Head of caudate nucleus (tissue), 42 donors: ENCODE measurements at regions of chr6 and their contacts with region 1.

Region 1: GRCh38 chr6:164927288-164928056 is 381.9 kb downstream of the C6orf118 start:
- DNase-seq: peak; percentile 77 to 94 (median 89)

Region 2: GRCh38 chr6:163419413-163420288 is 1507.8 kb before region 1 on chr6:
- intact Hi-C with region 1: loop called (anchors 5 kb)
- DNase-seq: peak in 1 of 42 donors; percentile 40

Region 3: DNA sequence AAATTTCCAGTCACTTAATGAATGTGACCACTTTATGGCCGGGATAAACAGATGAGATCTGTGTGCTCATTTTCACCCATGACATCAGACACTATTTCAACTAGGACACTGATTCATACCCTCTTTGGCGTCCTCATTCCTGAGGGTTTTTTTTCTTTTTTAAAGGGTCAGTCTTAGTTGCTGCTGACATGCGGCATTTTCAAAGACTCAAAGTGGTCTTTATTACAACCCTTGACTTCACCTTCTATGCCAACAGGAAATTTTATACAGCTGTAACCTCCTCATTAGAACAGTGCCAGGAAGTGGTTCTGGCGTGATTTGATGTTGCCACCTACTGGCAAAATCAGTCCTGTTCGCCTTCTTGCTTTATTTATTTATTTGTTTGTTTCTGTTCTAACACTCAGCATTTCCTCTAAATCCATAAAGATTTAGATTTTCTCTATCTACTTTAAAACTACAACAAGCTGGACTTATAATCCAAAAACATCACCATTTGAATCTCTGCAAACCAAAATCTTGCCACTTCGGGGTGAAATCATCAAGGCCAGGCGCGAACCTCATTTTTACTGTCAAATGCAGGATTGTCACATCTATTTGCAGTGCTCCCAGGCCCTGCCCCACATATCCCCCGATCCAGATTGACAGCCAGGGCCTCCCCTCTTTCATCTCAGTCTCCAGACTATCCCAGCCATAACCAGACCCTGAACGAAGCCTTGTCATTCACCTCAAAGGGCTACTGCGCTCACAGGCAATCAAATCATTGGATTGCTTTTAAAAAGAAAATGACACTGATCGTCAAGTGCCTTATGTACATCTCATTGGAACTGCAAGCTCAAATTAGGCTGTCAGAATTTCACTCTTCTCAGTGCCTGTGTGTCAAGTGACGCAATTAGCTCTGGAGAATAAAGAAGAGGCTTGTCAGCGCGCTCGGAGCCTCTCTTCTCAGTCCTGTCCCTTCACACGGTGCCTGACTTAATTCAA is 304.4 kb after region 1 on chr6:
- intact Hi-C with region 1: loop called (anchors 5 kb)
- DNase-seq: peak in 37 of 42 donors; percentile 17 to 82 (median 56)